Caco-2 (cell line): ENCODE measurements at regions of chr7 and their contacts with region 1.

Region 1: GRCh38 chr7:64794171-64794844 is at the start of gene ZNF138:
- DNase-seq: peak; percentile 96 to 97
- H3K4me3 ChIP-seq: peak within 1 kb of the TSS; percentile 92
- H3K4me3 Mint-ChIP-seq: peak within 1 kb of the TSS; percentile 96
- H3K27ac Mint-ChIP-seq: peak within 1 kb of the TSS; percentile 97
- H3K4me1 ChIP-seq: 0 out of 2 replicates have a peak, but pooled peaks cover 4% of the 10 kb centered on the region
- H3K4me1 Mint-ChIP-seq: no peaks in the 10 kb centered on the region
- H3K27me3 ChIP-seq: no peaks in the 10 kb centered on the region
- H3K27me3 Mint-ChIP-seq: no peaks in the 10 kb centered on the region
- CTCF ChIP-seq: no peak
- total RNA-seq, gene ZNF138: 10.2 and 12.5 TPM in 2 replicates

Region 2: DNA sequence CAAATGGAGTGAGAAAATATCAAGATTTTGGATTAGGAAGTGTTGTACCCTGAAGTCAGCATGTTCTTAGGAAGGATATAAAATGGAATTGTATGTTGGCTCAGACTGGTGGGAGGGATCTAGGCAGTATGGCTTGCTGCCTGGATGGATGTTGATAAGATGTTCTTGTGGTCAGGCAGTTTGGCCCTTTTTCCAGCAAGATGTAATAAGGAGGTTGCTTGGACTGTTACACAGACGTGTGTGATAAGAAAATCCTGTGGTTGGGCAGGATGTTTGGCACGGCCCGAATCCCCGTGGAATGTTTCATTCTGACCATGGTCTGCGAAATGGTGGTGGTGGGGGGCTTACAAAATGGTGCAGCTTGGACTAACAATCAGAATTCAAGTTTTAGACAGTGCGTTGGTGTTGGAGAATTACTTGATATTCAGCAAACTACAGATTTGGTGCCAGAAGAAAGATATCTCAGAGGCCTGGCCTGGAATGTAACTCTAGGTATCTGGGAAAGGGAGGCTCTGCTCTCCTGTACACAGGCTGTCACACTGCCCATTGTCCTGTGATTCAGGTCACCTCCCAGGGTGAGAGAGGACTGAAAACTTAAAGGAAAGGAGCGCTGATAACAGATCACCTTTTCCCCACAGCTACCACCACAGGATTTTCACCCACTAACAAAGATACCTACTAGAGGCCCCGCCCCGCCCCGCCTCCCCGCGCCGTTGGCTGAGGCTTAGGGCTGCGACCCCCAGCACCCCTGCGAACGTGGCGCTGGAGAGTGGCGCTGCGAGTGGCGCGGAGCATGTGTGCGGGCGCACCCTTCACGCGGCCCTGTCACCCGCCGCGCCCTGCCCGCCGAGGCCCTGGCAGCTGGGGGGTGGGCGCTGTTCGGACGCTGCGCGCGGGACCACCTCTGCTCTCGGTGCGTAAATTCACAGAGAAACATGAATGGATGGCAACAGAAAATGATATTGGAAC is 212.1 kb before region 1 on chr7:
- CTCF ChIA-PET with region 1: no interaction called
- POLR2A ChIA-PET with region 1: no interaction called
- intact Hi-C with region 1: no loop called
- DNase-seq: no peak
- H3K4me3 ChIP-seq: no peak overlapping the region
- H3K4me3 Mint-ChIP-seq: no peak overlapping the region
- H3K27ac Mint-ChIP-seq: no peak overlapping the region
- H3K4me1 ChIP-seq: no peaks in the 10 kb centered on the region
- H3K4me1 Mint-ChIP-seq: no peaks in the 10 kb centered on the region
- H3K27me3 ChIP-seq: no peaks in the 10 kb centered on the region
- H3K27me3 Mint-ChIP-seq: no peaks in the 10 kb centered on the region
- CTCF ChIP-seq: no peak

Region 3: DNA sequence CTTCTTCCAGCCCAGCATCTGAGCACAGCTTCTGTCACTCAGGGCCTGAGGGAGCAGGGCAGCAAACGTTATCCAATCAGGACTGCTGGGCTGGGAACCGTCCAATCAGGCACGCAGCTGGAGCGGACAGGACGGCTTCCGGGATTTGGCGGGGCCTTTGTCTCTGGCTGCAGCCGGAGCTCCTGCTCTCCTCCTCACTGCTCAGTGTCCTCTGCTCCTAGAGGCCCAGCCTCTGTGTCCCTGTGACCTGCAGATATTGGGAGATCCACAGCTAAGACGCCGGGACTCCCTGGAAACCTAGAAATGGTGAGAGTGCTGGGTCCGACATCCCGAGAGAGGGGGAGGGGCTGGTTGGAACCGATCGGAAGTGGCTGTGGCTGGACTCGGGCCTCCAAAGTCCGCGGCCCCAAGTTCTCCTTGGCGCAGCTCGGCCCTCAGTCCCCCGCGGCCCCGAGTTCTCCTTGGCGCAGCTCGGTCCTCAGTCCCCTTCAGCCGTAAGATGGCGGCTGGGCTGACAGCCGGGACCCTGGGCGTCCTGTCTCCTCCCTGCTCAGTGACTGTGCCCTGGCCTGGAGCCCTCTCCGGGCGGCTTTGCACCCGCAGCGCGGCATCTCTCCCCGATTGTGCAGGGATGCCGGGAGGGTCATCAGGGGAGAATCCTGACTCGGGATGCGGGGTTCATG is 128.2 kb before region 1 on chr7 and contains the start of gene ZNF107:
- CTCF ChIA-PET with region 1: no interaction called
- POLR2A ChIA-PET with region 1: no interaction called
- intact Hi-C with region 1: loop called (anchors 10 kb)
- DNase-seq: peak; percentile 93 to 97
- H3K4me3 ChIP-seq: peak within 1 kb of the TSS; percentile 70
- H3K4me3 Mint-ChIP-seq: peak within 1 kb of the TSS; percentile 94
- H3K27ac Mint-ChIP-seq: peak within 1 kb of the TSS; percentile 95
- H3K4me1 ChIP-seq: peaks cover 10% of the 10 kb centered on the region; the same call in 1 of the 2 replicates
- H3K4me1 Mint-ChIP-seq: peaks cover 16% of the 10 kb centered on the region
- H3K27me3 ChIP-seq: no peaks in the 10 kb centered on the region
- H3K27me3 Mint-ChIP-seq: no peaks in the 10 kb centered on the region
- CTCF ChIP-seq: no peak
- total RNA-seq, gene ZNF107: 12.0 and 13.0 TPM in 2 replicates